ENCODE measurements at regions of chr11 and their contacts with region 1.

Region 1: GRCh38 chr11:124961972-124962609 is 8.1 kb downstream of the CCDC15 start:
- DNase-seq: peak in 3 of 9 experiments; percentile 12 to 82 (median 75)
- ATAC-seq: peak; percentile 99
- H3K4me3 ChIP-seq: no peak overlapping the region
- H3K4me3 Mint-ChIP-seq: no peak overlapping the region
- H3K27ac ChIP-seq: no peak overlapping the region
- H3K27ac Mint-ChIP-seq: no peak overlapping the region
- H3K4me1 ChIP-seq: no peaks in the 10 kb centered on the region
- H3K4me1 Mint-ChIP-seq: no peaks in the 10 kb centered on the region
- H3K27me3 ChIP-seq: no peaks in the 10 kb centered on the region
- H3K27me3 Mint-ChIP-seq: no peaks in the 10 kb centered on the region
- CTCF ChIP-seq: peak; percentile 89

Region 2: GRCh38 chr11:125123947-125124617 is 162.0 kb after region 1 on chr11:
- CTCF ChIA-PET with region 1: interaction called, 5 read pairs
- POLR2A ChIA-PET with region 1: no interaction called
- intact Hi-C with region 1: loop called (anchors 1 to 5 kb)
- DNase-seq: peak in 5 of 9 experiments; percentile 28 to 64 (median 33)
- ATAC-seq: peak; percentile 48
- H3K4me3 ChIP-seq: no peak overlapping the region
- H3K4me3 Mint-ChIP-seq: no peak overlapping the region
- H3K27ac ChIP-seq: no peak overlapping the region
- H3K27ac Mint-ChIP-seq: no peak overlapping the region
- H3K4me1 ChIP-seq: no peaks in the 10 kb centered on the region
- H3K4me1 Mint-ChIP-seq: peaks cover 7% of the 10 kb centered on the region
- H3K27me3 ChIP-seq: peaks cover 0 to 12% of the 10 kb centered on the region in 2 experiments
- H3K27me3 Mint-ChIP-seq: peaks cover 24% of the 10 kb centered on the region
- CTCF ChIP-seq: peak; percentile 18

Region 3: DNA sequence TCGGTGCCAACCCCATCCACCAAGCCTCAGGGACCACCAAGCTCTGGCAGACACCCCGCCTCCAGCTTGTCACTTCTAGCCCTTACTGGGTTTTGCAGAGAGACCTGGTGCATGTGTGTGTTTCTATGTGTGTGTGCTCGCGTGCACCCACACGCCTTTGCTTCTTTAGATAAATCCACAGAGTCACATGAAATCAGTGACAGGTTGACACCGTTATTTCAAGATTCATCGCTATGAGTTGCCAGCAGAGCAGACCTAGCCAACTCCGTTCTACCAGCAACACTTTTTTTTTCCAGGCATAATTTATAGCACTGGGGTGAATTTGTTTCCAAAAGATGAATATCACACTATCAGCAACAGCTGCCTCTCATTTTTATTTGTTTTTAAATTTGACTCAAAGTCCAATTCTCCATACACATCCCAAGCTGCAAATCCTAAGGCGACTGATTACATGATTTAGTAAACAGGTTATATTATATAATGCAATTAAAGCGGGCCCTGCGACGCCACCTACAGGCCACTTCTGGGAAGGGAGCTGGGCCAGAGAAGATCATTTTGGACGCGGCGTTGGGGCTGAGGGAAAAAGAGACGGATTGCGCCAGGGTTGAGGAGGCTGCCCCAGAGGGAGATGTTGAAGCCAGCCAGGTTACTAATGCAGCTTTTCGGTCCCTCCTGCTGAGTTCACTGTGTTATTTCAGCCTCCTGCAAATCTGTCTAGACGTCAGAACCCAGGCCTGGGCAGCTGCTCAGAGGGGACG is 383.5 kb after region 1 on chr11:
- CTCF ChIA-PET with region 1: interaction called, 4 read pairs
- POLR2A ChIA-PET with region 1: no interaction called
- intact Hi-C with region 1: loop called in 1 of 2 experiments (anchors 2 kb)
- DNase-seq: peak in 5 of 9 experiments; percentile 14 to 45 (median 42)
- ATAC-seq: no peak
- H3K4me3 ChIP-seq: no peak overlapping the region
- H3K4me3 Mint-ChIP-seq: no peak overlapping the region
- H3K27ac ChIP-seq: no peak overlapping the region
- H3K27ac Mint-ChIP-seq: no peak overlapping the region
- H3K4me1 ChIP-seq: no peaks in the 10 kb centered on the region
- H3K4me1 Mint-ChIP-seq: peaks cover 2% of the 10 kb centered on the region
- H3K27me3 ChIP-seq: no peaks in the 10 kb centered on the region
- H3K27me3 Mint-ChIP-seq: peaks cover 15% of the 10 kb centered on the region
- CTCF ChIP-seq: peak; percentile 64

Region 4: GRCh38 chr11:125404776-125405435 is 442.8 kb after region 1 on chr11:
- CTCF ChIA-PET with region 1: no interaction called
- POLR2A ChIA-PET with region 1: no interaction called
- intact Hi-C with region 1: loop called in 1 of 2 experiments (anchors 1 kb)
- DNase-seq: peak; percentile 38 to 79 (median 67)
- ATAC-seq: peak; percentile 94
- H3K4me3 ChIP-seq: no peak overlapping the region
- H3K4me3 Mint-ChIP-seq: no peak overlapping the region
- H3K27ac ChIP-seq: no peak overlapping the region
- H3K27ac Mint-ChIP-seq: no peak overlapping the region
- H3K4me1 ChIP-seq: no peaks in the 10 kb centered on the region
- H3K4me1 Mint-ChIP-seq: peaks cover 6% of the 10 kb centered on the region
- H3K27me3 ChIP-seq: peaks cover 0 to 7% of the 10 kb centered on the region in 2 experiments
- H3K27me3 Mint-ChIP-seq: peaks cover 60% of the 10 kb centered on the region
- CTCF ChIP-seq: peak; percentile 88

Region 5: DNA sequence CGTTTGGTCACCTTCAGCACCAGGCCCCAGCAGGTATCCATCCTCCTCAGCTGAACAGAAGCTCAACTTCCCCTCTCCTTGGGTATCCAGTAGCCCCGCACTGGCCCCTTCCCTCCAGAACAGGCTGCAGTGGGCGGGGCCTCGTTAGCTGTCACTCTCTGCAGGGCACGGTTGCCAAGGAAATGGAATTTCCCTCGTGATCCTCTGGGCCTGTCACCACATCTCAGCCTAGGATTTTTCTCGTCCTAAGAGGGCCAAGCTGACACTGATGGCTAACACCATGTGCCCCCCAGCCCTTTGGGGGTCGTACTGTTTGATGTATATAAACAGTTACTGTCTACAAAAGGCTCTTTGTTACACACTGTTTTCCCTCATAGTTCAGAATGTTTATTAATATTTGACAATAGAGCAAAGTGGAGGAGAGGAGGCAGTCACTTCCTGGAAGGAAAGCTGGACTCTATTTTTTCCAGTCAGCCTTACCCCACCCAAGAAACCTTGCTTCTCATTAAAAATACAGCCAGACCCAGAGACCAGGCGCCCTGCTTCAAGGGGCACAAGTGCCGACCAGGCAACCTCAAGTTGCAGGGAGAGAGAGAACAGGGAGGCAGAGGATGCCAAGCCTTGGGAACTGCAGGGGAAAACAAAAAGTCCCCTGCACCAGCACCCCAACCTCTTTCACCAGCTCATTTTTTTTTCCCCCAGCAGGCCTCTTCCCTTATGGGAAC is 489.5 kb after region 1 on chr11:
- CTCF ChIA-PET with region 1: no interaction called
- POLR2A ChIA-PET with region 1: no interaction called
- intact Hi-C with region 1: loop called in 1 of 2 experiments (anchors 10 kb)
- DNase-seq: peak in 1 of 9 experiments; percentile 27
- ATAC-seq: no peak
- H3K4me3 ChIP-seq: no peak overlapping the region
- H3K4me3 Mint-ChIP-seq: no peak overlapping the region
- H3K27ac ChIP-seq: no peak overlapping the region
- H3K27ac Mint-ChIP-seq: no peak overlapping the region
- H3K4me1 ChIP-seq: no peaks in the 10 kb centered on the region
- H3K4me1 Mint-ChIP-seq: peaks cover 4% of the 10 kb centered on the region
- H3K27me3 ChIP-seq: no peaks in the 10 kb centered on the region
- H3K27me3 Mint-ChIP-seq: no peaks in the 10 kb centered on the region
- CTCF ChIP-seq: no peak

Region 6: GRCh38 chr11:125874556-125875124 is 912.5 kb after region 1 on chr11:
- CTCF ChIA-PET with region 1: no interaction called
- POLR2A ChIA-PET with region 1: no interaction called
- intact Hi-C with region 1: loop called in 1 of 2 experiments (anchors 5 kb)
- DNase-seq: peak in 7 of 9 experiments; percentile 20 to 64 (median 39)
- ATAC-seq: peak; percentile 29
- H3K4me3 ChIP-seq: no peak overlapping the region
- H3K4me3 Mint-ChIP-seq: no peak overlapping the region
- H3K27ac ChIP-seq: no peak overlapping the region
- H3K27ac Mint-ChIP-seq: no peak overlapping the region
- H3K4me1 ChIP-seq: no peaks in the 10 kb centered on the region
- H3K4me1 Mint-ChIP-seq: peaks cover 1% of the 10 kb centered on the region
- H3K27me3 ChIP-seq: no peaks in the 10 kb centered on the region
- H3K27me3 Mint-ChIP-seq: peaks cover 7% of the 10 kb centered on the region
- CTCF ChIP-seq: peak; percentile 56